Astrocyte of the cerebellum (primary cell): ENCODE measurements at regions of chr18 and their contacts with region 1.

Region 1: GRCh38 chr18:49628881-49629795 is 67.3 kb downstream of the LIPG start:
- DNase-seq: no peak
- H3K4me3 ChIP-seq: no peak overlapping the region
- CTCF ChIP-seq: peak; percentile 37

Region 2: GRCh38 chr18:49591271-49591670 is 37.9 kb before region 1 on chr18:
- in situ Hi-C with region 1: loop called (anchors 5 kb)
- DNase-seq: no peak
- H3K4me3 ChIP-seq: no peak overlapping the region
- CTCF ChIP-seq: no peak

Region 3: GRCh38 chr18:49668574-49669275 is 39.6 kb after region 1 on chr18:
- in situ Hi-C with region 1: no loop called
- DNase-seq: peak; percentile 43
- H3K4me3 ChIP-seq: no peak overlapping the region
- CTCF ChIP-seq: no peak